Dendritic cell treated with granulocyte-macrophage colony-stimulating factor and Interleukin-4, amounts not matched to agents 40 ng/mL and 50 ng/mL, for 4 days (primary cell): ENCODE measurements at regions of chr17 and their contacts with region 1.

Region 1: GRCh38 chr17:77247048-77247541 is 106.3 kb downstream of the SEC14L1 start:
- H3K4me3 Mint-ChIP-seq: peak overlapping the region; percentile 61
- H3K27ac Mint-ChIP-seq: peak overlapping the region; percentile 38
- H3K4me1 Mint-ChIP-seq: peaks cover 20% of the 10 kb centered on the region
- H3K27me3 Mint-ChIP-seq: peaks cover 34% of the 10 kb centered on the region

Region 2: GRCh38 chr17:77011173-77012011 is 235.7 kb before region 1 on chr17:
- intact Hi-C with region 1: loop called (anchors 5 kb)
- H3K4me3 Mint-ChIP-seq: no peak overlapping the region
- H3K27ac Mint-ChIP-seq: no peak overlapping the region
- H3K4me1 Mint-ChIP-seq: no peaks in the 10 kb centered on the region
- H3K27me3 Mint-ChIP-seq: peaks cover 11% of the 10 kb centered on the region

Region 3: DNA sequence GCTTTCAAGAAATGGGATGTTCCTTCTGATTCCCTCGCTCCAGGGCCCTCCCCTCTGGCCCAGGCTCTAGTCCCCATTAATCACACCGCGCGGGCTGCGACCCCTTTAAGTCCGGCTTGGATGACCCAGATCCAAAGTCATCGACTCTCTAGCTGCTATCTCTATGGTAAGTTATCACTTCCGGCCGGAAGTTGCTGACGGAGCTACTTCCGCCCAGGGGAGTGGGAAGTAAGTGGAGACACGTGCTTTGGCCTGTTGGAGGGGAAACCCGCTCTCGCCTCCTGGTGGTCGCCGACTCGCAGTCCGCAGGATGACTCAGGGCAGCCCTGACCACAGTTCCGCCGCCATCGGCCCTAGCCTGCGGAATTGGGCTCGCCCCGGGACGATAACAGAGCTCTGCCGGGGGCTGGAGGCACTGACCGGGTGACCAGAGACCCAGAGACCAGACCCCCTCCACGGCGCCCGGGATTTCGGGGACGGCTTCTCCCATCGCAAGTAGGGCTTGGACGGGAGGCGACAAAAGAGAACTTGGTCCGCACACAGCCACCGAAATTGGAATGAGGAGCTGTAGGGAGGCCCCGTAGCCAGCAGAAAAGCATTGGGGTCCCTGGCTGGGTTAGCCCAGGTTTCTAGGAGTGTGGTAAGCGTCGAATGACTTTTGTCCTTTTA is 158.5 kb before region 1 on chr17:
- intact Hi-C with region 1: loop called (anchors 1 kb)
- H3K4me3 Mint-ChIP-seq: peak overlapping the region; percentile 94
- H3K27ac Mint-ChIP-seq: peak overlapping the region; percentile 99
- H3K4me1 Mint-ChIP-seq: peaks cover 43% of the 10 kb centered on the region
- H3K27me3 Mint-ChIP-seq: peaks cover 21% of the 10 kb centered on the region

Region 4: DNA sequence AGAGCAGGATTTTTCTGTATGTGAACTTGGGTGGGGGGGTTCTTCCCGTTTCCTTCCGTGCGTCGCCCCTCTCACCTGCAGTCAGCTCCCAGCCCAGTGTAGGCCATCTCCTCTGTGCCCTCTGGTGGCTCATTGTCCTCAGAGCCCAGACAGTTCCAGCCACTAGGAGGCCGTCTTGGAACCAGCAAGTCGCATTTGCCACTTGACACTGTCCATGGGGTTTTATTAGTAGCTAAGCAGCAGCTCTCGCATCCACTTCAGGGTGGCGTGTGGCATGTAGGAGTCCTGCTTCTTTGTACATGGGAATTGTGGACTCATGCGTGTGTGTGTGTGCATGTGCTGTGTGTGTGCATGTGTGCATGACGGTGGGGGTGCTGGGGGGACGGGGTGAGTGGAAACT is 32.4 kb before region 1 on chr17:
- intact Hi-C with region 1: loop called (anchors 5 kb)
- H3K4me3 Mint-ChIP-seq: no peak overlapping the region
- H3K27ac Mint-ChIP-seq: no peak overlapping the region
- H3K4me1 Mint-ChIP-seq: peaks cover 35% of the 10 kb centered on the region
- H3K27me3 Mint-ChIP-seq: no peaks in the 10 kb centered on the region